ENCODE measurements at regions of chr20 and their contacts with region 1.

Region 1: DNA sequence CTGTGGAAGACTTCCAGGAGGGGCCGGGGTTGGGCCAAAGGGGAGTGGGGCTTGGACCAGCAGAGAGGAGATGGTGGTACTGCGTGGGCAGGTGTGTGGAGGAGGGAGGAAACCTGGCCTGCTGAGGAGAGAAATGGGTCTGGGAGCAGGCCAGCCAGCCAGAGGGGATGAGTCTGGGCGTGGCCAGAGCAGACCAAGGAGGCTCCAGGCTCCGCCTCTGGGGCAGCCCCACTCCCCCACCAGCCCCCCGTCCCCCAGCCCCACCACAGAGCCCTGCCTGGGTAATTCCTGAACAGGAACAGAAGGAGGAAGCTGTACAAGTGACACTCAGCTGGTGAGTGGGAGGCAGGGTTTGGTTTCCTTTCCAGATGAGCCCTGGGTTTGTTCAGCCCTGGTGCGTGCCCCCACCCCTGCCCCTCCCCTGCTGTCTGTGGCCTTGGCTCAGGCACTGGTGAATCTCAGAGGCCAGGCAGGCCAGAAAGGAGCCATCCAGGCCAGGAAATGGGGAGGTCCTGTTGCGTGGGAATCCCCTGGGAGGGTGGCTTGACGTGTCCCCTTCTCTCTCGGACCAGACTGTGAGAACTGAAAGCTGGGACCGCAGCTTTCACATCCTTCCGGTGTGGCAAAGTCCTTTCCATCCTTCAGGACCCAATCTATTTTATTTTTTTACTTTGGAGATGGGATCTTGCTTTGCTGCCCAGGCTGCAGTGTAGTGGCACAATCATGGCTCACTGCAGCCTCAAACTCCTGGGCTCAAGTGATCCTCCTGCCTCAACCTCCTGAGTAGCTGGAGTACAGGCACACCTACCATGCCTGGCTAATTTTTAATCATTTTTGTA is 9.4 kb upstream of the SRC start:
- DNase-seq: peak; percentile 94
- ATAC-seq: peak; percentile 88
- H3K4me3 ChIP-seq: peak overlapping the region; percentile 58; the same call in 1 of the 2 replicates
- H3K27ac ChIP-seq: peak overlapping the region; percentile 87
- H3K4me1 ChIP-seq: peaks cover 38% of the 10 kb centered on the region
- H3K27me3 ChIP-seq: no peaks in the 10 kb centered on the region
- CTCF ChIP-seq: no peak
- EP300 ChIP-seq: peak; percentile 66 to 81; a peak in 3 of 4 replicates
- POLR2A ChIP-seq: peak; percentile 41; the same call in 1 of the 2 replicates
- RAD21 ChIP-seq: no peak

Region 2: GRCh38 chr20:37257988-37258387 is 78.6 kb before region 1 on chr20:
- CTCF ChIA-PET with region 1: no interaction called
- POLR2A ChIA-PET with region 1: no interaction called
- RAD21 ChIA-PET with region 1: no interaction called
- SMC1A ChIA-PET with region 1: no interaction called
- in situ Hi-C with region 1: no loop called
- intact Hi-C with region 1: no loop called
- DNase-seq: no peak
- ATAC-seq: no peak
- H3K4me3 ChIP-seq: no peak overlapping the region
- H3K27ac ChIP-seq: no peak overlapping the region
- H3K4me1 ChIP-seq: no peaks in the 10 kb centered on the region
- H3K27me3 ChIP-seq: no peaks in the 10 kb centered on the region; a peak in 1 of 4 replicates
- CTCF ChIP-seq: no peak
- EP300 ChIP-seq: no peak
- POLR2A ChIP-seq: no peak
- RAD21 ChIP-seq: no peak

Region 3: DNA sequence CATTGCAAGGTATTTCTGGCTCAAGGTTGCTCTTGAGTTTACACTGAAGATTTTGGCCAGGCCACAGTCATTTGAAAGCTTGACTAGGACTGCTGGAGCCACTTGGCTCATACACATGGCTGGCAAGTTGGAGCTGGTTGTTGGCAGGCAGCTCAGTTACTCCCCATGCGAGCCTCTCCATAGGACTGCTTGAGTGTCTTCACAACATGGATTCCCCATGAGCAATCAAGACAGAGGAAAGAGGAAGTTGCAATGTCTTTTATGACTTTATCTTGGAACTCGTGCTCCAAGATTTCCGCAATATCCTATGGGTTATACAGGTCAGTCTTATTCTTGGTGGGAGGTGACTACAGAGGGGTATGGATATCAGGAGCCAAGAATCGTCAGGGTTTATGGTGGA is 48.5 kb before region 1 on chr20:
- CTCF ChIA-PET with region 1: interaction called, 4 read pairs
- POLR2A ChIA-PET with region 1: interaction called, 12 read pairs
- RAD21 ChIA-PET with region 1: interaction called, 20 read pairs
- SMC1A ChIA-PET with region 1: interaction called, 6 read pairs
- in situ Hi-C with region 1: no loop called
- intact Hi-C with region 1: loop called (anchors 2 kb)
- DNase-seq: no peak
- ATAC-seq: no peak
- H3K4me3 ChIP-seq: no peak overlapping the region
- H3K27ac ChIP-seq: no peak overlapping the region
- H3K4me1 ChIP-seq: peaks cover 16% of the 10 kb centered on the region
- H3K27me3 ChIP-seq: no peaks in the 10 kb centered on the region
- CTCF ChIP-seq: no peak
- EP300 ChIP-seq: no peak
- POLR2A ChIP-seq: no peak
- RAD21 ChIP-seq: no peak

Region 4: DNA sequence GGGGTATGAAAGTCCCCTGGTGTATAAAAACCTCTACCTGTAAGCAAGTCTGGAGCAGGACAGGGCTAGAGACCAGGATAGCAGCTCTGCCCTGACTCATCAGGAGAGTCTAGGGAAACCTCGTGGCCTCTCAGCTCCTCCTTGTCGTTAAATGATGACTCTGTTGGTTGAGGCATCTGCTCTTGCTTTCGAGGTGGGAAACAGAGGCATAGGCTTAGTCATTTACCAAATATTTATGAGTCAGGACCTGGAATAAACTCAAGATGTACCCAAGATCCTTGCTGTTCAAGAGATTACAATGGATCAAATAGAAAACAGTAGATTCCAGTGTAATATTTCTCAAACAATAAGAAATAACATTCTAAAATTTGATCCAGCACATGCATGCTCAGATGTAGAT is 41.6 kb before region 1 on chr20:
- CTCF ChIA-PET with region 1: no interaction called
- POLR2A ChIA-PET with region 1: interaction called, 12 read pairs
- RAD21 ChIA-PET with region 1: interaction called, 20 read pairs
- SMC1A ChIA-PET with region 1: interaction called, 8 read pairs
- in situ Hi-C with region 1: no loop called
- intact Hi-C with region 1: loop called (anchors 2 kb)
- DNase-seq: no peak
- ATAC-seq: peak; percentile 26
- H3K4me3 ChIP-seq: no peak overlapping the region; the same call in 1 of the 2 replicates
- H3K27ac ChIP-seq: peak overlapping the region; percentile 66
- H3K4me1 ChIP-seq: peaks cover 63% of the 10 kb centered on the region
- H3K27me3 ChIP-seq: no peaks in the 10 kb centered on the region
- CTCF ChIP-seq: no peak
- EP300 ChIP-seq: no peak
- POLR2A ChIP-seq: no peak
- RAD21 ChIP-seq: no peak

Region 5: GRCh38 chr20:37308086-37309050 is 28.2 kb before region 1 on chr20:
- CTCF ChIA-PET with region 1: no interaction called
- POLR2A ChIA-PET with region 1: interaction called, 12 read pairs
- RAD21 ChIA-PET with region 1: interaction called, 5 read pairs
- SMC1A ChIA-PET with region 1: interaction called, 5 read pairs
- in situ Hi-C with region 1: no loop called
- intact Hi-C with region 1: no loop called
- DNase-seq: peak; percentile 84
- ATAC-seq: peak; percentile 98
- H3K4me3 ChIP-seq: no peak overlapping the region
- H3K27ac ChIP-seq: peak overlapping the region; percentile 93
- H3K4me1 ChIP-seq: peaks cover 36% of the 10 kb centered on the region
- H3K27me3 ChIP-seq: no peaks in the 10 kb centered on the region
- CTCF ChIP-seq: no peak
- EP300 ChIP-seq: no peak
- POLR2A ChIP-seq: 0 out of 2 replicates have a peak, but pooled peaks have one; percentile 35
- RAD21 ChIP-seq: no peak

Region 6: DNA sequence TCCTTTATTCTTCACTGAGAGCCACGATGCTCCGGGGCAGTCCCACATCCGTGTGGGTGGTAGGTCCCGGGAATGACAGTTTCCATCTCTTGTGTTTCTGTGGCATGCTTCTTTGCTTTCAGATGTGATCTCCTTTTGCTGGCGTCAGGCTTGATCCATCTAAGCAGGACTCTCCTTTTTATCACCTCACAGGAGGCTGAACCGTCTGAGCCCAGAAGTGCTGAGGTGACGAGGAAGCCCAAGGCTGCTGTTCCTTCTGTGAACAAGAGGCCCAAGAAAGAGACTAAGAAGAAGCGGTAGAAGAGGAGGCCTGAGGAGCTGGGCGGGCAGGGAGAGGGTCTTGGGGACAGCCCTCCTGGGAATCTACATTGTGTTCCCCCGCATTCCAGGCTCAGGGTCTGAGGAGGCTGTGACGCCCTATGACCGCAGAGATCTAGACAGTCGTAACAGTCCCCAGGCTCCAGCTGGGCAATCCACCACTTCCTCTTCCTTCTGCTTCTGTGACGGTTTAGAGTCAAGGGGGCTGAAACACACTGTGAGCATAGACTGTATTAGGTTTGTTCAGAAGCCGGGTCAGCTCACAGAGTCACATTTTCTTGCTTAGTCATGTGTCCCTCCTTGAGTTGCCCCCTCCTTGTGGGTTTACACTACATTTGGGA is 20.3 kb before region 1 on chr20:
- CTCF ChIA-PET with region 1: no interaction called
- POLR2A ChIA-PET with region 1: interaction called, 9 read pairs
- RAD21 ChIA-PET with region 1: interaction called, 14 read pairs
- SMC1A ChIA-PET with region 1: interaction called, 4 read pairs
- in situ Hi-C with region 1: no loop called
- intact Hi-C with region 1: no loop called
- DNase-seq: no peak
- ATAC-seq: peak; percentile 91
- H3K4me3 ChIP-seq: no peak overlapping the region
- H3K27ac ChIP-seq: peak overlapping the region; percentile 93
- H3K4me1 ChIP-seq: peaks cover 33% of the 10 kb centered on the region
- H3K27me3 ChIP-seq: no peaks in the 10 kb centered on the region
- CTCF ChIP-seq: no peak
- EP300 ChIP-seq: 0 out of 4 replicates have a peak, but pooled peaks of 1 of the 2 experiments have one; percentile 22
- POLR2A ChIP-seq: no peak; the same call in 1 of the 2 replicates
- RAD21 ChIP-seq: no peak

Region 7: DNA sequence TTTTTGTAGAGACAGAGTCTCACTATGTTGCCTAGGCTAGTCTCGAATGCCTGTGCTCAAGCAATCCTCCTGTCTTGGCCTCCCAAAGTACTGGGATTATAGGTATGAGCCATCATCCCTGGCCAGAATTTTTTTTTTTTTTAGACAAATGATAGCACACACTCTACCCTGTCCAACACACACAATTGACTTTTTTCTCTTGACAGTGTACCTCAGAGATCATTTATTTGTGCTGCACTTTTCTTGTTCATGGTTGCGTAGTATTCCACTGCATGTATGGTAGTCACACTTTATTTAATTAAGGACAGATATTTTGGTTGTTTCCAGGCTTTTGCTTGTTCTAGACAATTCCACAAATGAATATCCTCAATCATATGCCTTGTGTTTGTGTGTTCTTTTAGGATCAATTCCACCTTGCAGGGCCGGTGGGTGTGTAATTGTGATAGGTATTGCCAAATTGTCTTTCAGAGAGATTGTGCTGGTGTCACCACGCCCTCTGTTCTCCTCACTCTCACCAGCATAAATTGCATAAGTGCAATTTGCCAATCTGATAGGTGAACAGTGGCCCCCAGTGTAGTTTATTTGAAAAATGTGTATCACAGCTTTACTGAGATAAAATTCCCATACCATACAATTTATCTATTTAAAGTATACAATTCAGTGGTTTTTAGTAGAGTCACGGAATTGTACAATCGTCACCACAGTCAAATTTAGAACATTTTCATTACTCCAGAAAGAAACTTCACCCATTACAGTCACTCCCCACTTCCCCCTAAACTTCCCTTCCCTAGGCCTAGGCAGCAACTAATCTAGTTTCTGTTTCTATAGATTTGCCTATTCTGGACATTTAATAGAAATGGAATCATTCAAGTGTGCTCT is 29.4 kb after region 1 on chr20:
- CTCF ChIA-PET with region 1: no interaction called
- POLR2A ChIA-PET with region 1: interaction called, 5 read pairs
- RAD21 ChIA-PET with region 1: interaction called, 7 read pairs
- SMC1A ChIA-PET with region 1: interaction called, 4 read pairs
- in situ Hi-C with region 1: no loop called
- intact Hi-C with region 1: loop called (anchors 1 kb)
- DNase-seq: peak; percentile 90
- ATAC-seq: peak; percentile 86
- H3K4me3 ChIP-seq: peak overlapping the region; percentile 2; the same call in 1 of the 2 replicates
- H3K27ac ChIP-seq: peak overlapping the region; percentile 87
- H3K4me1 ChIP-seq: peaks cover 74% of the 10 kb centered on the region
- H3K27me3 ChIP-seq: no peaks in the 10 kb centered on the region
- CTCF ChIP-seq: peak in 1 of 3 experiments; percentile 2; a peak in 1 of 6 replicates
- EP300 ChIP-seq: peak; percentile 77 to 79; a peak in 3 of 4 replicates
- POLR2A ChIP-seq: no peak
- RAD21 ChIP-seq: peak; percentile 57

Measured in GM12878 (cell line).